CD4-positive, alpha-beta memory T cell (primary cell): ENCODE measurements at regions of chr1 and their contacts with region 1.

Region 1: DNA sequence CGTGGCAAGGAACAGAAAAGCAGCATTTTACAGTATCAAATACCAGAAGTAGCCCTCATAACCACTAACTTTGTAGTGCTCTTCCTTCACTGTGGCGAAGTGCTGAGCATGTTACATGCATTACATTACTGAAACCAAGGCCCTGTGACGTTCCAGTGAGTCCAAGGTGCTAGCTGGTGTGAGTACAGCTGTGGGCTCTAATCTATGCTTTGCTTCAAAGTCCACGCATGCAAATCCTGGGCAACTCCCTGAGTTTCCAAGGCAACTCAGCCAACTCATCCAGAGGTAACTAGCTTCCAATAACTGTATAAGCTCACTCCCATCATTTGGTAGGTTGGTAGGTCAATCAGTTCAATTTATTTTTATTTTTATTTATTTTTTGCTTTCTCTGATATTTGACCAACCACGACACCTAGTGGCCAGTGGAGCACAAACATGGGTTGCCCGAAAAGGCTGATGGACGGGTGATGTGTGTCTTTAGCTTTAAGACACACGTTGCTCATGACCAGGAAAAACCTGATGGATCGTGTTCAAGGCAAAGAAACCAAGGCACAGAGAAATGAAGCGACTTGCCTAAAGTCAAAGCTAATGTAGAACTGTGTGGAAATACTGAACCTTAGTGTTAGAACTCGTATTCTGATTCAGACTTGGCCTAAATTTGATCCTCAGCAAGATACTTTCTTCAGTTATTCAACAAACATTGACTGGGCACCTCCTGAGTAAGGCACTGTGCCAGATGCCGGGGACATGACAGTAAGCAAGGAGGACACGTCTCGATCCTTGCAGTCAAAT is 73.0 kb downstream of the GNG12 start:
- DNase-seq: peak in 4 of 5 donors; percentile 33 to 58 (median 48)
- H3K4me3 ChIP-seq: no peak overlapping the region
- H3K4me3 Mint-ChIP-seq: no peak overlapping the region
- H3K27ac ChIP-seq: no peak overlapping the region
- H3K27ac Mint-ChIP-seq: no peak overlapping the region
- H3K4me1 ChIP-seq: no peaks in the 10 kb centered on the region
- H3K4me1 Mint-ChIP-seq: no peaks in the 10 kb centered on the region
- H3K27me3 ChIP-seq: no peaks in the 10 kb centered on the region
- H3K27me3 Mint-ChIP-seq: peaks cover 17 to 20% of the 10 kb centered on the region in 2 donors

Region 2: GRCh38 chr1:67524143-67525052 is 235.8 kb before region 1 on chr1:
- CTCF ChIA-PET with region 1: interaction called, 10 read pairs
- POLR2A ChIA-PET with region 1: no interaction called
- intact Hi-C with region 1: no loop called
- DNase-seq: no peak
- H3K4me3 ChIP-seq: no peak overlapping the region
- H3K4me3 Mint-ChIP-seq: no peak overlapping the region
- H3K27ac ChIP-seq: no peak overlapping the region
- H3K27ac Mint-ChIP-seq: peak overlapping the region in 1 of 7 donors; percentile 20
- H3K4me1 ChIP-seq: no peaks in the 10 kb centered on the region
- H3K4me1 Mint-ChIP-seq: no peaks in the 10 kb centered on the region
- H3K27me3 ChIP-seq: no peaks in the 10 kb centered on the region
- H3K27me3 Mint-ChIP-seq: peaks cover 10 to 14% of the 10 kb centered on the region in 2 donors

Region 3: DNA sequence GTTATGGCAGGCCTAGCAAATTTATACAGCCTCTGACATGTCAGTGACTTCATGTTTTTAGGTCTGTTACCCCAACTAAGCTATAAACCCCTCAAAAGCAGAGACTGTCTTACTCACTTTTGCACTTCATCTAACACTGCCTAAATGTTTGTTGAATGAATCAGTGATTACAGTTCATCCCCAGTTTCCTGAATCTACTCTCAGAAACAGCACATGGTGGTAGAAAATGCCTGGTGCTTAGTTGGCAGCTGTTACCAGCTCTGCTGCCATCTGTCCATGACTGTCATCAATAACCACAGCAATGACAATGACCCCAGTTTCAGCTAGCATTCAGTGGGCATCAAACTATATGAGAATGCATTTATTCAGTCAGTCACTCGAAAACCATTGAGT is 219.5 kb before region 1 on chr1:
- CTCF ChIA-PET with region 1: interaction called, 84 read pairs
- POLR2A ChIA-PET with region 1: no interaction called
- intact Hi-C with region 1: no loop called
- DNase-seq: no peak
- H3K4me3 ChIP-seq: no peak overlapping the region
- H3K4me3 Mint-ChIP-seq: no peak overlapping the region
- H3K27ac ChIP-seq: no peak overlapping the region
- H3K27ac Mint-ChIP-seq: no peak overlapping the region
- H3K4me1 ChIP-seq: no peaks in the 10 kb centered on the region
- H3K4me1 Mint-ChIP-seq: no peaks in the 10 kb centered on the region
- H3K27me3 ChIP-seq: no peaks in the 10 kb centered on the region
- H3K27me3 Mint-ChIP-seq: no peaks in the 10 kb centered on the region

Region 4: DNA sequence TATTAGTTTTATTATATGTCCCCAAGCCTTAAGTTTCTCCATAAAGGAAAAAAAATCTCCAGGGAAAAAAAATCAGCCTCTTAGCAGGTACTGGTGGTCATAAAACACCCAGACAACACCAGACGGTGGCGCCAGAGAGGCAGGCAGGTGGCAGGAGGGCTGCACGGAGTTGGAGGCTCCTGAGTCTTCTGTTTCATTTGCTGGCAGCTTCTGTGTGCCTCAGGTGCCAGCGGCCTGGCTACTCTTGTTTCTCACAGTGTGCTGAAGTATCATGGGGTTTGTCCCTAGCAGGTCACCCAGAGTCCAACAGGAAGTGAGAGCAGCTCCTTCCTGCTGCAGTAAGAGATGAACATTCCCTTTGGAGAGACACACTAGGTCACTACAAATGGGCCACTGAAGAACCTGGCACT is 198.5 kb before region 1 on chr1:
- CTCF ChIA-PET with region 1: interaction called, 320 read pairs
- POLR2A ChIA-PET with region 1: interaction called, 7 read pairs
- intact Hi-C with region 1: loop called (anchors 1 kb)
- DNase-seq: peak; percentile 67 to 72 (median 70)
- H3K4me3 ChIP-seq: no peak overlapping the region
- H3K4me3 Mint-ChIP-seq: no peak overlapping the region
- H3K27ac ChIP-seq: no peak overlapping the region
- H3K27ac Mint-ChIP-seq: no peak overlapping the region
- H3K4me1 ChIP-seq: no peaks in the 10 kb centered on the region
- H3K4me1 Mint-ChIP-seq: peaks cover 0 to 6% (median 2%) of the 10 kb centered on the region in 4 donors
- H3K27me3 ChIP-seq: no peaks in the 10 kb centered on the region
- H3K27me3 Mint-ChIP-seq: peaks cover 3 to 11% of the 10 kb centered on the region in 2 donors

Region 5: DNA sequence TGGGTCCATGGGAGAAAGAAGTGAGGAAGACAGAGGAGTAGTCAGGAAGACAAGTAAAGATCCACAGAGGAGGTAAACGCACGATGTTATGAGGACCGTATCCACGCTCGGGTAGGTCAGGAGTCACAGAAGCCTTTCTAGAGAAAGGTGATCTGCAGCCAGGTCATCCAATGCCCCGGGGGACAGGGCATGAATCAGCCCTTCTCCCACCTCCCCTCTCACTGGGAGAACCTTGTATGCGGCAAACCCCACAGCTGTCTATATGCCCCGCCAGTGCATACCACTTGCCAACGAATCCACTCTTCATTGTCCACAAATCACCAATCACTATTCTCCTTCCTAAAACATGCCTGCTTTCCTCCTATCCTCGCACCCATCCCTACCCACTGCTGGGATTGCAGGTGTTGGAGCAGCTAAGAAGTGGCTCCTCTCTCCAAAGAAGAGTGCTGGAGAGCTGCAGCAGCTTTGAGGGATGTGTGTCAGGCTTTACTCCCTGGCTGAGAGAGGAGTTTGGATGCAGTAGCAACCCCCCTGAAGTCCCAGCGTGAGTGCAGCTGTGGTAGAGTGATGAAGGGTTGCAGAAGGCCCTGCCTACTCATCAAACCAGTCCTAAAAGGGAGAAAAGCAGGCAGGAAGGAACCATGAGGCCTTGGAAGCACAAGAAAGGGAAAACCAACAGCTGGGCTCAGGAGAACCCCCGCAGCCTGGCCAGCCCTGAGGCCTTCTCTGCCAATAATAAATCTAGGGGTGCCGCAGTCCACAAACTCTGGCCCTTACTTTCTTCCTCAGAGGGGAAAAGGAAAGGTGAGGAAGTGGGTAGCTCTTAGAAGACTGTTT is 177.4 kb before region 1 on chr1:
- CTCF ChIA-PET with region 1: interaction called, 12 read pairs
- POLR2A ChIA-PET with region 1: no interaction called
- intact Hi-C with region 1: no loop called
- DNase-seq: no peak
- H3K4me3 ChIP-seq: no peak overlapping the region
- H3K4me3 Mint-ChIP-seq: no peak overlapping the region
- H3K27ac ChIP-seq: no peak overlapping the region
- H3K27ac Mint-ChIP-seq: no peak overlapping the region
- H3K4me1 ChIP-seq: no peaks in the 10 kb centered on the region
- H3K4me1 Mint-ChIP-seq: no peaks in the 10 kb centered on the region
- H3K27me3 ChIP-seq: no peaks in the 10 kb centered on the region
- H3K27me3 Mint-ChIP-seq: peaks cover 0 to 2% of the 10 kb centered on the region in 2 donors

Region 6: GRCh38 chr1:67741121-67741520 is 19.1 kb before region 1 on chr1:
- CTCF ChIA-PET with region 1: interaction called, 50 read pairs
- POLR2A ChIA-PET with region 1: no interaction called
- intact Hi-C with region 1: no loop called
- DNase-seq: no peak
- H3K4me3 ChIP-seq: no peak overlapping the region
- H3K4me3 Mint-ChIP-seq: no peak overlapping the region
- H3K27ac ChIP-seq: no peak overlapping the region
- H3K27ac Mint-ChIP-seq: no peak overlapping the region
- H3K4me1 ChIP-seq: peaks cover 9% of the 10 kb centered on the region
- H3K4me1 Mint-ChIP-seq: peaks cover 6 to 7% (median 7%) of the 10 kb centered on the region in 4 donors
- H3K27me3 ChIP-seq: no peaks in the 10 kb centered on the region
- H3K27me3 Mint-ChIP-seq: peaks cover 2 to 8% of the 10 kb centered on the region in 2 donors

Region 7: DNA sequence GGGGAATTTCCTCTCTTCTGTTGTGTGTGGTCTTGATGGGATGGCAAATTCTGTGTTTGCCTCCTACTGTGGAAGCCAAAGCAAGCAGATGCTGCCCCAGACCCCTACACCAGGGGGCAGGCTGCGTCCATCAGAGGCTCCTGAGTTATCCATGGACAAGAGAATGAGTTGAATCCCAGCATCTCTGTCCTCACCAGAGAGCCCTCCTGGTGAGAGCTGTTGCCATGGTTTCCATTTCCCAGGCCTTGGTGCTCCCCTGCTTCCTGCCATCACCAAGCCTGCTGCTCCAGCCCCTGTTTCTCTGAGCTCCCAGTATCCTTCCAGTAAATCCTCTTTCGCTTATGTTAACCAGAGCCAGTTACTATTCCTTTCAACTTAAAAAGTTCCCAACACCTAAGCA is 93.5 kb after region 1 on chr1:
- CTCF ChIA-PET with region 1: no interaction called
- POLR2A ChIA-PET with region 1: no interaction called
- intact Hi-C with region 1: no loop called
- DNase-seq: no peak
- H3K4me3 ChIP-seq: no peak overlapping the region
- H3K4me3 Mint-ChIP-seq: no peak overlapping the region
- H3K27ac ChIP-seq: no peak overlapping the region
- H3K27ac Mint-ChIP-seq: no peak overlapping the region
- H3K4me1 ChIP-seq: no peaks in the 10 kb centered on the region
- H3K4me1 Mint-ChIP-seq: no peaks in the 10 kb centered on the region
- H3K27me3 ChIP-seq: no peaks in the 10 kb centered on the region
- H3K27me3 Mint-ChIP-seq: peaks cover 6 to 10% of the 10 kb centered on the region in 2 donors